BJ (cell line): ENCODE measurements at regions of chr16 and their contacts with region 1.

Region 1: DNA sequence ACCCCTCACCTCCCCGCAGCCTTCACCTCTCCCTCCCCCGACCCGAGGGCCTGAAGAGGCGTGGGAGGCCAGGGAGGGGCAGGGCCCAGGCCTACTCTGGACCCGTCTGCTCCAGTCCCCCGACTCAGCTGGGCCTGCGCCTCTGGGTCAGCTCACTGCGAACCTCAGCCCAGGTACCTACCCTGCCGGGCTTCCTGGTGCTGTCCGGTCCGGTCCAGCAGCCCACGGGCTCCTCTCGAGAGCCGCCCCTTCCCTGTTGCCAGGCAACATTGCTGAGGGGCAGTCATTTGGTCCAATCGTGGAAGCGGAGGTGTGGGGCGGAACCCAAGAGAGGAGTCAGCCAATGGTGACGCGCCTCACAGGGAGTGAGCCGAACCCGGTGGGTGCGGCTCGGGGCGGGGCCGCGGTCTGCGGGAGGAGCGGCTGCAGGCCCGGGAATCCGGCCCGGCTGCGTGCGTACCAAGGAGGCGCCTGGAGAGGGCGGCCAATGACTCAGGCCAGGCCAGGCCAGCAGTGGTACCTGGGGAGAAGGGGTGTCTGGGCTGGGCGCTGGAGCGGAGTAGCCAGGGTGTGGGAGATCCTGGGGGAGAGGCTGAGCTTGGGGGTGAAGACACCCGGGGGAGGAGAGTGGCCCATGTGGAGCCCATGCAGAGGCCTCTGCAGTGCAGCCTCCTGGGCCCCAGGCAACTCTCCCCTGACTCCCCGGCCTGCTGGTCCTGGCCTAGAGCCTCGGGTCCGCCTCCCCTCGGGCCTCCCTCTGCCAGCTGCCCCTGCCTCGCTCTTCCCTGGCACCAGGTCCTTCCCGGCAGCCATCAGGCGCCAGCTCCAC is at the start of gene MEAK7:
- DNase-seq: peak; percentile 83
- H3K4me3 ChIP-seq: peak within 1 kb of the TSS; percentile 67
- H3K27me3 ChIP-seq: no peaks in the 10 kb centered on the region
- CTCF ChIP-seq: no peak
- polyA plus RNA-seq, gene MEAK7: 29.1 and 41.2 TPM in 2 replicates

Region 2: GRCh38 chr16:84186685-84187437 is 317.8 kb before region 1 on chr16 and contains the start of gene TAF1C:
- CTCF ChIA-PET with region 1: no interaction called
- POLR2A ChIA-PET with region 1: no interaction called
- DNase-seq: peak; percentile 64
- H3K4me3 ChIP-seq: peak within 1 kb of the TSS; percentile 99
- H3K27me3 ChIP-seq: no peaks in the 10 kb centered on the region
- CTCF ChIP-seq: peak; percentile 97
- polyA plus RNA-seq, gene TAF1C: 12.8 and 23.4 TPM in 2 replicates

Region 3: GRCh38 chr16:84532291-84532724 is 27.7 kb after region 1 on chr16:
- CTCF ChIA-PET with region 1: interaction called, 10 read pairs
- POLR2A ChIA-PET with region 1: no interaction called
- DNase-seq: peak; percentile 95
- H3K4me3 ChIP-seq: no peak overlapping the region
- H3K27me3 ChIP-seq: no peaks in the 10 kb centered on the region
- CTCF ChIP-seq: no peak